ENCODE measurements at regions of chr2 and their contacts with region 1.

Region 1: GRCh38 chr2:213151437-213152064 is at the start of gene IKZF2:
- DNase-seq: peak; percentile 67
- H3K4me3 Mint-ChIP-seq: peak within 1 kb of the TSS; percentile 77
- H3K27ac Mint-ChIP-seq: peak within 1 kb of the TSS; percentile 52
- H3K4me1 Mint-ChIP-seq: peaks cover 20% of the 10 kb centered on the region
- H3K27me3 Mint-ChIP-seq: peaks cover 39% of the 10 kb centered on the region
- total RNA-seq, gene IKZF2: 8.1 to 9.1 TPM

Region 2: GRCh38 chr2:211903961-211904360 is 1247.6 kb before region 1 on chr2:
- CTCF ChIA-PET with region 1: no interaction called
- POLR2A ChIA-PET with region 1: no interaction called
- intact Hi-C with region 1: no loop called
- DNase-seq: no peak
- H3K4me3 Mint-ChIP-seq: no peak overlapping the region
- H3K27ac Mint-ChIP-seq: no peak overlapping the region
- H3K4me1 Mint-ChIP-seq: no peaks in the 10 kb centered on the region
- H3K27me3 Mint-ChIP-seq: no peaks in the 10 kb centered on the region

Region 3: GRCh38 chr2:212777020-212777491 is 374.5 kb before region 1 on chr2:
- CTCF ChIA-PET with region 1: interaction called, 9 read pairs
- POLR2A ChIA-PET with region 1: no interaction called
- intact Hi-C with region 1: loop called (anchors 1 kb)
- DNase-seq: no peak
- H3K4me3 Mint-ChIP-seq: no peak overlapping the region
- H3K27ac Mint-ChIP-seq: no peak overlapping the region
- H3K4me1 Mint-ChIP-seq: no peaks in the 10 kb centered on the region
- H3K27me3 Mint-ChIP-seq: no peaks in the 10 kb centered on the region

Region 4: DNA sequence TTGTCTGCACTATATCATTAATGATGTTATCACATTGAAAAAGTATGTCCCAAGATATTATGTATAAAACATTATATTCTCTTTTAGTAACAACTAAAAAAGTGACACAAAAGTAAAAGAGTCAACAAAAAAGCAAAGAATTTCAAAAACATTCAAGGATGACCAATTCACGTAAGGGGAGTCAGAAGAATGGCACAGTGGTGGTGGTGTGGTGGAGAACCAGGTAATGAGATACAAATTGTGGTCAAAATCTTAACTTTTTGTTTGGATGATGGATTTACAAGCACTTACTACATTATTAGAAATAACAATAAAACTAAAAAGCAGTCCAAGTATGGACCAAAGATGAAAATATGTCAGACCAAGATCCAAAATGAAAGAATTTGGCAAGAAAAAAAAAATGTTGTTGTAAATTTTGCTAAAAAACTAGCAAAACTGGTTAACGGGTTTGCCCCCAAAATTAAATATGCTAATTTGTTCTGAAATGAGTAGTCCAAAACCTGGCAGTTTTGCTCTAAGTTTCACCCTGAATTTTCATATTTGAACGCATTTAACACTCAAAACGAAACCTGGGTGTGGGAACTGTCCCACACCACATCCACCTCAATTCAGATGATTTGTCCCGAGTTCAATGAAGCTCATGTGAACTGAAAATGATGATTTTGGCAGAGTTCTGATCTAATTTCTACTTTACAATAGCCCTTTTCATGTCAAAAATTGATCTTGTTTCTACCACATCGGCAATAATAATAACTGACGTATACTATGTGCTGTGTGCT is 136.0 kb before region 1 on chr2:
- CTCF ChIA-PET with region 1: interaction called, 3 read pairs
- POLR2A ChIA-PET with region 1: no interaction called
- intact Hi-C with region 1: loop called (anchors 2 kb)
- DNase-seq: peak; percentile 76
- H3K4me3 Mint-ChIP-seq: peak overlapping the region; percentile 35
- H3K27ac Mint-ChIP-seq: peak overlapping the region; percentile 58
- H3K4me1 Mint-ChIP-seq: peaks cover 26% of the 10 kb centered on the region
- H3K27me3 Mint-ChIP-seq: peaks cover 13% of the 10 kb centered on the region

Region 5: DNA sequence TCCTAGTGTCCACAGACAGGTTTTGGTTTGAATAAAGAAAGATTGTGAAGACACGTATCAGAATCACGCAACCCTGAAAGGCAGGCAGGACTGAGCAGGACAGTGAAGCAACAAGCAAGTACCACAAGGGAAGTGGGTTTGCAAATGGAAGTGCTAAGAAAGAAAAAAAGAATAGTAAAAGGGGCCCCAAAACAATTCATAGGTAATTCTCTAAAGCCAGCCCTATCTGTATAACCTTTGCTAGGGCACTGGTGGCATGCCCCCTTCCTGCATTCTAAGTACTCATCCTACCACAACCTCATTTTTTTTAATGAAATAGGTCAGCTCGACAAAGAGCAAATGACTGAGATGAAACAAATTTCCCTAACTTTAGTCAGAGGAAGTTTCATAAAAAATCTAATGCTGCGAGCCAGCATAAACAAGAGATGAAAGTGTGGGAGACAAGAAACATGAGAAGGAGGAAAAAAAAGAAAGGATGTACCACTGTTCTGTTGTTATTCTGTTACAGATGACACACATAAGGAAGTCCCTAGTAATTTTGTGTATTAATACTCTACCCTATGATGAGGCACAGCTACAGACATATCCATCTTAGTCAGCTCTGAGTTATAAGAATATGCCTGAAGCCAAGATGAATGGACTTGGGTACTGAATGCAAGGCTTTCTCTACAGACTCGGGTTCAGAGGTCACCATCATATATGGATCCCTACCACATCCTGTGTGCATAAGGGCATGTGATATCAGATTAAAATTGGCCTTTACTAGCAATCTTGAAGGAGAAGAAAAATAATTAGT is 32.3 kb before region 1 on chr2:
- CTCF ChIA-PET with region 1: interaction called, 4 read pairs
- POLR2A ChIA-PET with region 1: no interaction called
- intact Hi-C with region 1: loop called (anchors 1 kb)
- DNase-seq: peak; percentile 27
- H3K4me3 Mint-ChIP-seq: no peak overlapping the region
- H3K27ac Mint-ChIP-seq: peak overlapping the region; percentile 67
- H3K4me1 Mint-ChIP-seq: peaks cover 14% of the 10 kb centered on the region
- H3K27me3 Mint-ChIP-seq: no peaks in the 10 kb centered on the region

Measured in activated CD4-positive, alpha-beta memory T cell treated with anti-CD3 and anti-CD28 coated beads for 36 hours (primary cell).